ENCODE measurements at regions of chr7 and their contacts with region 1.

Region 1: GRCh38 chr7:21261627-21262594 is 166.0 kb upstream of the SP4 start:
- DNase-seq: peak; percentile 18
- ATAC-seq: peak; percentile 96
- H3K4me3 Mint-ChIP-seq: no peak overlapping the region
- H3K27ac Mint-ChIP-seq: peak overlapping the region; percentile 6
- H3K4me1 Mint-ChIP-seq: peaks cover 14% of the 10 kb centered on the region
- H3K27me3 Mint-ChIP-seq: no peaks in the 10 kb centered on the region
- CTCF ChIP-seq: no peak

Region 2: DNA sequence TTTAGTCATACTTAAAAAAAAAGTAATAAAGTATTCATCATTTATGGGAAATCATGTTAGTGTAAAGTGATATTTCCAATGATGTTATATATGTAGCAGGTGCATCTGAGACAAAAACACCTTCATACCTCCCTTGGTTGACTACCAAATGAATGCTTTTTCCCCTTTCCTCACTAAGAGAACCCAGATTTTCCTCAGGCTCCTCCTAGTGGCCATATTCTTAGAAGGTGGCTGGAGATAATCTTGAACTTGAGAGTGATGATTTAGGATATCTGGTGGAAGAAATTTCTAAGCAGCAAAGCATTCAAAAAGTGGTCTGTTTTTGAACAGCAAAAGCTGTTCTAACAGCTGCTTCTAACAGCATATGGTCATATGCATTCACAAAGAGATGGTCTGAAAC is 264.1 kb after region 1 on chr7:
- CTCF ChIA-PET with region 1: interaction called, 3 read pairs
- POLR2A ChIA-PET with region 1: no interaction called
- intact Hi-C with region 1: loop called (anchors 1 kb)
- DNase-seq: no peak
- ATAC-seq: no peak
- H3K4me3 Mint-ChIP-seq: no peak overlapping the region
- H3K27ac Mint-ChIP-seq: no peak overlapping the region
- H3K4me1 Mint-ChIP-seq: no peaks in the 10 kb centered on the region
- H3K27me3 Mint-ChIP-seq: no peaks in the 10 kb centered on the region
- CTCF ChIP-seq: no peak

Measured in activated B cell treated with CpG ODN at 0.5 μM for 24 hours (primary cell).